Activated CD4-positive, alpha-beta T cell treated with anti-CD3 and anti-CD28 coated beads for 36 hours (primary cell): ENCODE measurements at regions of chr21 and their contacts with region 1.

Region 1: DNA sequence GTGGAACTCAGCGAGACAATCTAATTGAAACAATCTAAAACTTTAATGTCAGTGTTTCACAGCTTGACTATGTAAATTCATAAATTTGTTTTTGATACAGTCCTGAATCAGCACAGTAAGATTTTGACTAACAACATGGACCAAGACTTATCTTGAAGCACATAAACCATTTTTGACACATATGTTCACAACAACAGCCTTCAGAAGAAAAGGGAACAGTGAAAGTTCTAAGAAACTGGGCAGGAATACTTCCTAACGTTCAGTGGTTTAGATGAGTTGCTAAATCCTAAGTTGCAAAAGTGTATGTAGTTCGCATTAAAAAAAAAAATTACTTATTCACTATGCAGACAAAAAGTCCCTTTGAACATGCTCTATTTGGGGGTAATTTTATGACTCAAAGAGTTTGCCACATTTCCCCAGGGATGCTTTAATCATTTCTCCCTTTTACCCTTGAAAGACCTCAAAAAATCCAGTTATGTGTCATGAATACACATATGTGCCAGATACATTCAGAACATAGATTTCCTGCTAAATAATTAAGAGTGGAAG is 120.2 kb downstream of the MRPL39 start:
- DNase-seq: no peak
- ATAC-seq: peak; percentile 75
- H3K4me3 Mint-ChIP-seq: peak overlapping the region; percentile 57
- H3K27ac Mint-ChIP-seq: peak overlapping the region; percentile 90
- H3K4me1 Mint-ChIP-seq: peaks cover 81% of the 10 kb centered on the region
- H3K27me3 Mint-ChIP-seq: no peaks in the 10 kb centered on the region

Region 2: GRCh38 chr21:25375675-25376074 is 111.4 kb before region 1 on chr21:
- CTCF ChIA-PET with region 1: no interaction called
- POLR2A ChIA-PET with region 1: no interaction called
- intact Hi-C with region 1: no loop called
- DNase-seq: no peak
- ATAC-seq: no peak
- H3K4me3 Mint-ChIP-seq: no peak overlapping the region
- H3K27ac Mint-ChIP-seq: no peak overlapping the region
- H3K4me1 Mint-ChIP-seq: peaks cover 10% of the 10 kb centered on the region
- H3K27me3 Mint-ChIP-seq: peaks cover 3% of the 10 kb centered on the region

Region 3: GRCh38 chr21:25428537-25428936 is 58.6 kb before region 1 on chr21:
- CTCF ChIA-PET with region 1: interaction called, 5 read pairs
- POLR2A ChIA-PET with region 1: interaction called, 4 read pairs
- intact Hi-C with region 1: loop called (anchors 1 kb)
- DNase-seq: no peak
- ATAC-seq: peak; percentile 93
- H3K4me3 Mint-ChIP-seq: peak overlapping the region; percentile 32
- H3K27ac Mint-ChIP-seq: peak overlapping the region; percentile 45
- H3K4me1 Mint-ChIP-seq: peaks cover 52% of the 10 kb centered on the region
- H3K27me3 Mint-ChIP-seq: no peaks in the 10 kb centered on the region

Region 4: DNA sequence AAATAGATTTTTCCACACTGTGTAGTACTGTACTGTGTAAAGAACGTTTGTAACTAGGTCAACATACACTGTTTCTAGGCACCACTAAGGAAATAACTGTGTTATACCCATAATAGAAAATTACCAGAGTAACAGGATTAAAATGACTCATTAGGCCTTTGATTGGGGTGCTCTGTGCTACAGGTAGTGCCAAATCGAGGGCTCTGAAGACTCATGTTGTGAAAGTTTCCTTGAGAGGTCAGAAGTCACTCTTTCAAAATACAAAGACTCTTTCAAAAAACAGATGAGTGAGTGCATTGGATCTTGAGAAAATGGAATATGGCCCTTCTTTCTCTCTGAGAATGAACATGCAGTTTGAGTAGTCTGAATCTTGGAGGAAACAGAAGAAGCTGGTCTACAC is 22.8 kb before region 1 on chr21:
- CTCF ChIA-PET with region 1: interaction called, 8 read pairs
- POLR2A ChIA-PET with region 1: interaction called, 5 read pairs
- intact Hi-C with region 1: loop called (anchors 1 kb)
- DNase-seq: peak; percentile 43
- ATAC-seq: peak; percentile 77
- H3K4me3 Mint-ChIP-seq: peak overlapping the region; percentile 45
- H3K27ac Mint-ChIP-seq: peak overlapping the region; percentile 95
- H3K4me1 Mint-ChIP-seq: peaks cover 77% of the 10 kb centered on the region
- H3K27me3 Mint-ChIP-seq: no peaks in the 10 kb centered on the region

Region 5: DNA sequence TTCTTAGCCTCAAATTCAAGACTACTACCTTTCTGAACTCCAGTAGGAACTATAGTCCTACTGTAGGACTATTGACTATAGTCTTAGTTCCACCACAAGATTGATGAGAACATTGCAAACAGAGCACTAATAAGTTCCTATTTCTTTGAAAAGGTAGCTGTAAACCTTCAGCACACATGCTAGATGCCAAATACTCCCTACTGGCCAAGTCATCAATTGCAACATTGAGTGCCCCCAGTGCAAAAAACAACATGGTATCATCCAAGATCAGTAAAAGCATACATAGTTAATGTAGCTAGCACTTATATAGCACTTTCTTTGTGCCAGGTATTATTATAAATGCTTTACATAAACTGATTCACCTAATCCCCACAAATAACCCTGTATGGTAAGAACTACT is 20.4 kb after region 1 on chr21:
- CTCF ChIA-PET with region 1: interaction called, 26 read pairs
- POLR2A ChIA-PET with region 1: interaction called, 16 read pairs
- intact Hi-C with region 1: loop called (anchors 1 kb)
- DNase-seq: peak; percentile 42
- ATAC-seq: peak; percentile 37
- H3K4me3 Mint-ChIP-seq: peak overlapping the region; percentile 66
- H3K27ac Mint-ChIP-seq: peak overlapping the region; percentile 86
- H3K4me1 Mint-ChIP-seq: peaks cover 75% of the 10 kb centered on the region
- H3K27me3 Mint-ChIP-seq: no peaks in the 10 kb centered on the region

Region 6: DNA sequence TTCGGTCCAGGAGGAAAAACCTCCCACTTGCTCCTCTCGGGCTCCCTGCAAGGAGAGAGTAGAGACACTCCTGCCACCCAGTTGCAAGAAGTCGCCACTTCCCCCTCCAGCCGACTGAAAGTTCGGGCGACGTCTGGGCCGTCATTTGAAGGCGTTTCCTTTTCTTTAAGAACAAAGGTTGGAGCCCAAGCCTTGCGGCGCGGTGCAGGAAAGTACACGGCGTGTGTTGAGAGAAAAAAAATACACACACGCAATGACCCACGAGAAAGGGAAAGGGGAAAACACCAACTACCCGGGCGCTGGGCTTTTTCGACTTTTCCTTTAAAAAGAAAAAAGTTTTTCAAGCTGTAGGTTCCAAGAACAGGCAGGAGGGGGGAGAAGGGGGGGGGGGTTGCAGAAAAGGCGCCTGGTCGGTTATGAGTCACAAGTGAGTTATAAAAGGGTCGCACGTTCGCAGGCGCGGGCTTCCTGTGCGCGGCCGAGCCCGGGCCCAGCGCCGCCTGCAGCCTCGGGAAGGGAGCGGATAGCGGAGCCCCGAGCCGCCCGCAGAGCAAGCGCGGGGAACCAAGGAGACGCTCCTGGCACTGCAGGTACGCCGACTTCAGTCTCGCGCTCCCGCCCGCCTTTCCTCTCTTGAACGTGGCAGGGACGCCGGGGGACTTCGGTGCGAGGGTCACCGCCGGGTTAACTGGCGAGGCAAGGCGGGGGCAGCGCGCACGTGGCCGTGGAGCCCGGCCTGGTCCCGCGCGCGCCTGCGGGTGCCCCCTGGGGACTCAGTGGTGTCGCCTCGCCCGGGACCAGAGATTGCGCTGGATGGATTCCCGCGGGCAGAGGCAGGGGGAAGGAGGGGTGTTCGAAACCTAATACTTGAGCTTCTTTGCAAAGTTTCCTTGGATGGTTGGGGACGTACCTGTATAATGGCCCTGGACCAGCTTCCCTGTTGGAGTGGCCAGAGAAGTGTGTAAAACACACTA is 74.8 kb after region 1 on chr21:
- CTCF ChIA-PET with region 1: interaction called, 7 read pairs
- POLR2A ChIA-PET with region 1: interaction called, 10 read pairs
- intact Hi-C with region 1: loop called (anchors 1 kb)
- DNase-seq: peak; percentile 90
- ATAC-seq: peak; percentile 69
- H3K4me3 Mint-ChIP-seq: peak overlapping the region; percentile 93
- H3K27ac Mint-ChIP-seq: peak overlapping the region; percentile 100
- H3K4me1 Mint-ChIP-seq: peaks cover 43% of the 10 kb centered on the region
- H3K27me3 Mint-ChIP-seq: no peaks in the 10 kb centered on the region